PC-9 (cell line): ENCODE measurements at regions of chr5 and their contacts with region 1.

Region 1: DNA sequence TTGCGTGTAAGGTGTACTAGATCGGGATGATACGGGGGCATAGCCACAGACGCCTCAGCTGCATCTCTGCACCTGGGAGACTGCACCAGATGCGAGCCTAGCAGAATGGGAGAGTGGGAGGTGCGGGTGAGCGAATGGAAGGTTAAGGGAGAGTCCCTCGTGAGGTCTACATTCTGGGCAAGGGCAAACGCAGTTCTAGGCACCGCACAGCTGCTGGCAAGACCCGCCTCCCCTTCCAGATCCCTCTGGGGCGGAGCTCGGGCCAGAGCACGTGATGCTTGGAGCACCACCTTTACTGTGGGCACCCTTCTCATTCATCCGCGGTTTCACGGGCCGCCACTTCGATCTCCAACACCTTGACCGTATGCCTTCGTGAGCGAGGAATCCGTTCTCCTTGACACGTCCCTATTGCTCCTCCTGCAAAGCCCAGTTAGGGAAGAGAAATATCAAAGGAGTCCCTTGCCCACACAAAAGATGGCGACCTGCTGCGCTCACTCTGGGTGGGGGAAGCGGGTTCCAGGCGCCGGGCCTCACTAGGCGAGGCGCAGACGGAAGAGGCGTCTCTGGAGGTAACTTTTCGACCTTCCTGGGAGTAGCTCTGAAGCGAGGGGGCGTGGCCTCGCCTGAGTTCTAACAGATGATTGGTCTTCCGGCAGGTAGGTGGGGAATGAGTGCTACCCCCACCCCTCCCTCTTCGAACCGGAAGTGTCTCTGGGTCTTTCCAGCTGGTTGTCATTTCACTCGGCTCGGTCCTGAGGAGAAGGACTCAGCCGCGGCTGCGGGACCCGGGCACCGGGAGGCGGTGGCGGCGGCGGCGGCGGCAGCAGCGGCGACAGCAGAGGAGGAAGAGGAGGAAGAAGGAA is at the start of gene CPEB4:
- DNase-seq: peak; percentile 96 to 98
- H3K4me3 ChIP-seq: peak within 1 kb of the TSS; percentile 86
- H3K27ac ChIP-seq: peak within 1 kb of the TSS; percentile 84
- H3K4me1 ChIP-seq: peaks cover 66% of the 10 kb centered on the region
- H3K27me3 ChIP-seq: no peaks in the 10 kb centered on the region
- CTCF ChIP-seq: no peak
- total RNA-seq, gene CPEB4: 11.6 and 15.4 TPM in 2 replicates

Region 2: DNA sequence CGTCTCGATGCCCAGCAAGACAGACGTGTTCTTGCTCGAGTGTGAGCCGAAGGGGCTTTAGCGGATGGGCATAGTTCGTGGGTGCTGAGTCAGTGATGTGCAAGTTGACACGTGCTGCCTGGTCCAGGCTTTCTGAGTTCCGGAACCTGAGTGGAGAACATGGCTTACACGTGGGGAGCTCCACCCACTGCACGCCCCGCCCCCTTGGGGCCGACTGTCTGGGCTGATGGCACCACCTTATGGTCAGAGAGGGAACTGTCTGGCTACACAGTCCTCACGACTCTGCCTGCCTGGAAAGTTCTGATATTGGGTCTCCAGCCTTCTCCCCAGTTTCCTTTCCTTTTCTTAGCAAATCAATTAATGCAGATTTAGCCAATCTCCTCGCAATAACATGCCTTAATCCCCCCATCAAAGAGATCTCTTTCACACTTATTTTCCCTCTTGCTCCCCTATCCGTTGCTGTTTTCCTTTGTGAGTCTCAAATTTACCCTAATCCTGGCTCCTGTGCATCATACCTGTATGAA is 555.8 kb before region 1 on chr5:
- CTCF ChIA-PET with region 1: no interaction called
- POLR2A ChIA-PET with region 1: no interaction called
- intact Hi-C with region 1: loop called (anchors 5 kb)
- DNase-seq: peak; percentile 55 to 57
- H3K4me3 ChIP-seq: no peak overlapping the region
- H3K27ac ChIP-seq: peak overlapping the region; percentile 100; the same call in 1 of the 2 replicates
- H3K4me1 ChIP-seq: peaks cover 64% of the 10 kb centered on the region
- H3K27me3 ChIP-seq: no peaks in the 10 kb centered on the region
- CTCF ChIP-seq: peak; percentile 72

Region 3: DNA sequence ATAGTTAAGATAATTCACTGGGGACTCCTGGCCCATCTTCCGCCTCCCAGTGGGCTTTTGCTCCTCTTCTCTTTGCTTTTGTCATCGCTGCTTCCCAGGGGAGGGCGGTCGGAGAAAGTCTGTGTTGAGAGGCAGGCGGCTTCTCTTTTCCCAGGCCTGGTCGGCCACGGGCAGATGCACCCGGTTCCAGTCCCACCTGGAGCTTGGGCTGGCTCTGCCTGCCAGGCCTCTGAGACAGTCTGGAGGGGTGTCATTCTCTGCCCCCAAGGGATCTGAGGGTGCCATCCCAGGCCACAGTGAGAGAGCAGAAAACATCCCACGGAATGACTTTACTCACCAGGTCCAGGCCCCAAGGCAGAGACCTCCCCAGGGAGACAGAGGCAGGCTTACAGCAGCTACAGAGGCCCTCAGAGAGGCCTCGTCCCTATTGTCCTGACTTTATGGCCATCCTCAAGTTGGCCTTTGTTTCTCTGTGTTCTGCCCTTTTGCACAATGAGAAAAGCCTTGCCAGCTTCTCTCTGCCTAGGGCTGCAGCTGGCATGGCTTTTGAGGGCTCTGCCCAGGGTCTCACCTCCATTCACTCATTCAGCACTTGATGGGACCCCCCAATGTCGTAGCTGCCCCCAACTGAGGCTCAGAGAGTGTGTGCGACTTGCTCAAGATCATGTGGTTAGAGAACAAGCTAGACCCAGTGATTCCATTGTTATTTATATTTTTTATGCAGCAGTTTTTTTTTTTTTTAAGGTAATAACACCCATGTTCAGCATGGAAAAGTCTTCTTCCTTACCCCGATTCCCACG is 227.2 kb before region 1 on chr5:
- CTCF ChIA-PET with region 1: no interaction called
- POLR2A ChIA-PET with region 1: interaction called, 16 read pairs
- intact Hi-C with region 1: no loop called
- DNase-seq: no peak
- H3K4me3 ChIP-seq: no peak overlapping the region
- H3K27ac ChIP-seq: no peak overlapping the region
- H3K4me1 ChIP-seq: no peaks in the 10 kb centered on the region
- H3K27me3 ChIP-seq: no peaks in the 10 kb centered on the region
- CTCF ChIP-seq: no peak

Region 4: GRCh38 chr5:173793721-173794690 is 93.8 kb before region 1 on chr5:
- CTCF ChIA-PET with region 1: interaction called, 12 read pairs
- POLR2A ChIA-PET with region 1: no interaction called
- intact Hi-C with region 1: loop called (anchors 1 kb)
- DNase-seq: peak; percentile 51 to 64
- H3K4me3 ChIP-seq: no peak overlapping the region
- H3K27ac ChIP-seq: peak overlapping the region; percentile 74
- H3K4me1 ChIP-seq: peaks cover 70% of the 10 kb centered on the region
- H3K27me3 ChIP-seq: no peaks in the 10 kb centered on the region
- CTCF ChIP-seq: no peak

Region 5: DNA sequence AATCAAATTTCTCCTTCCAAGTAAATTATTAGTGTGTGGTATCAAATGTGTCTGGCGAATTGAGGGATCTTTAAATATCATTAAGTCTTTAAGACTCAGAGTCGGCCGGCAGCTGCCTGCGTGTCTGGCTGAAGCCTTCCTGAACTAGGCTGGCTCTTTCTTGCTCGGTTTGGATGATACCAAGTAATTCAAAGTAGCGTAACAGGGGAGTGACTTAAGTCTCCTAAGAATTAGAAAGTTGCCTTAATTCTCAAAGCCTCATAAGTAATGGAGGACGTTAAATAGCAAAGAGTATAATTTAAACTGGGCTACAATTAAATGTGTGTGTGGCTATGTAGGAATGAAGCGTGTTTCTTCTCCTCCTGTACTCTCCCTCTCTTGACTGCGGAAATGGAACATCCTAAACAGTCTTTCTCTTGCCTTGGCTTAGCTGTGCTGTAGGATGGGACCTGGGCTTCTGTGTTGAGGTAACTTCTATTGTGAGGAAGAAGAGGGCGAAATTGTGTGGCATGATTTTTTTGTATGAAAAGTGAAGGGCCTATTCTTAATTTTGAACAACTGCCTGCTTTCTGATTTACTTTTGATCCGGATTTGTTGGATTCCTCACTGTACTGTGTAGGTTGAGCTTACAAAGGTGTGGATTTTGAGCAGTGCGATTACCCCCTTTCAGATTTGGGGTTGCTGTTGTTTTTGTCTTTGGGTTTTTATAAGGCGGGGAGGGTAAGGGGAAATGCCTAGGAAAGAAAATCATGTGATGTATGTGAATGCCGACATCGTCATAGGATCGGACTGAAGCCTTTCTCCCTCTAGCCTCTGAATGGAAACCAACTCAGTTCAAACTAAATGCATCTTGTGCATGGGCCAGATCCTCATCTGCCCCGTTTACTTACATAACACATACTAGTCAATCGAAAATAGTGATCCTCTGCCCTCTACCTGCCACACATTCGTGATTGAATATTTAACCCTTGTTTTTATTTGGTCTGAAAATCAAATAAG is 30.2 kb after region 1 on chr5:
- CTCF ChIA-PET with region 1: no interaction called
- POLR2A ChIA-PET with region 1: interaction called, 3 read pairs
- intact Hi-C with region 1: loop called (anchors 1 kb)
- DNase-seq: peak; percentile 53 to 76
- H3K4me3 ChIP-seq: peak overlapping the region; percentile 79
- H3K27ac ChIP-seq: peak overlapping the region; percentile 86
- H3K4me1 ChIP-seq: peaks cover 29% of the 10 kb centered on the region
- H3K27me3 ChIP-seq: no peaks in the 10 kb centered on the region
- CTCF ChIP-seq: peak; percentile 43; the same call in 1 of the 2 replicates

Region 6: DNA sequence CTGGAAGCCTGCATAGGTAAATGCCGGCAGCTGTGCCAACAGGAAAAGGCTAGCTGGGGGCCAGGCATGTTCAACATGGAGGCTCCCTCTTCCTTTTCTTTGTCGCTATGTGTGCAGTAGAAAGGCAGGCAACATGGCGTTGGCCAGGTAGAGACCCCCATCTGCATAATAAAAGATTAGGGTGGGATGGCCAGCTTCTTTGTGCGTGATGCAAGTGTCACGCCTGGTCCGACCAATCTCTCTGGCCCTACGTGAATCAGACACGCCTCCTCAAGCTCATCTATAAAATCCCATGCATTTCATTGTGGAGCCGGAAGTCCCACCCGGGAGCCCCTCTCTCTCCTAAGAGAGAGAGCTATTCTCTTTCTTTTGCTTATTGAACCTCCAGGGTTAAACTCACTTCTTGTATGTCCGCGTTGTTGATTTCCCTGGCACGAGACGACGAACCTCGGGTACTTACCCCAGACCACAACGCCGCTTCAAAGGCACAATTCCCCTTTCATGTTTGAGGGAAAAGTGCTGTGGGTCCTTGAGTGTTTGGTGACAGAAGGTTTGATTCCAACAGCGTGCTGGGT is 76.1 kb after region 1 on chr5:
- CTCF ChIA-PET with region 1: no interaction called
- POLR2A ChIA-PET with region 1: interaction called, 13 read pairs
- intact Hi-C with region 1: loop called (anchors 5 kb)
- DNase-seq: peak; percentile 41 to 64
- H3K4me3 ChIP-seq: peak overlapping the region; percentile 50; the same call in 1 of the 2 replicates
- H3K27ac ChIP-seq: peak overlapping the region; percentile 66
- H3K4me1 ChIP-seq: peaks cover 16% of the 10 kb centered on the region
- H3K27me3 ChIP-seq: no peaks in the 10 kb centered on the region
- CTCF ChIP-seq: no peak